Sigmoid colon (tissue), 7 donors: ENCODE measurements at regions of chr1 and their contacts with region 1.

Region 1: DNA sequence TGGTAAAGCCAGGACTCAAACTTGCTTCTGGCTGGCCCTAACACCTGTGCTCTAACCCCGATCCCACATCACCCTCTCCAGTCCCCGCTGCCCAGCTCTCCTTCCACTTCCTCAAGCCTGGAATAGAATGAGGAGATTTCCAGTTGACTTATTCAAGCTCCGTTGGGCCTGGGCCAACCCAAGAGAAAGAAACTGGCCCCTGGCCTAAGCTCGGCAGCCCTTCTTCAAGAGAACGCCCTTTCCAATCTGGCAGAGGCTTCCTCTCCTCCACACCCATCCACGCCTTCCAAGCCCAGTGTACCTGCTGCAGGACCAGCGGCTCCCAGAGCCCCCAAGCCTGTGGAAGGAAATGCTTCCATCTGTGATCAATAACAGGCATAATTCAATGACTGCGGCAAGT is 51.9 kb downstream of the LRRN2 start:
- DNase-seq: peak; percentile 87
- H3K4me3 ChIP-seq: no peak overlapping the region
- H3K27ac ChIP-seq: no peak overlapping the region
- H3K4me1 ChIP-seq: peaks cover 0 to 28% (median 18%) of the 10 kb centered on the region in 4 donors
- H3K27me3 ChIP-seq: no peaks in the 10 kb centered on the region
- CTCF ChIP-seq: no peak
- EP300 ChIP-seq: no peak
- POLR2A ChIP-seq: no peak

Region 2: GRCh38 chr1:204516180-204516879 is 117.3 kb before region 1 on chr1 and contains the start of gene MDM4:
- intact Hi-C with region 1: no loop called
- DNase-seq: peak; percentile 96
- H3K4me3 ChIP-seq: peak within 1 kb of the TSS; percentile 74 to 82 (median 79)
- H3K27ac ChIP-seq: peak within 1 kb of the TSS; percentile 88 to 93 (median 90)
- H3K4me1 ChIP-seq: peaks cover 0 to 41% (median 32%) of the 10 kb centered on the region in 4 donors
- H3K27me3 ChIP-seq: no peaks in the 10 kb centered on the region
- CTCF ChIP-seq: no peak
- EP300 ChIP-seq: peak in 1 of 4 donors; percentile 40
- POLR2A ChIP-seq: peak; percentile 71 to 83
- total RNA-seq, gene MDM4: 48.2 to 82.0 (median 53.1) TPM

Region 3: DNA sequence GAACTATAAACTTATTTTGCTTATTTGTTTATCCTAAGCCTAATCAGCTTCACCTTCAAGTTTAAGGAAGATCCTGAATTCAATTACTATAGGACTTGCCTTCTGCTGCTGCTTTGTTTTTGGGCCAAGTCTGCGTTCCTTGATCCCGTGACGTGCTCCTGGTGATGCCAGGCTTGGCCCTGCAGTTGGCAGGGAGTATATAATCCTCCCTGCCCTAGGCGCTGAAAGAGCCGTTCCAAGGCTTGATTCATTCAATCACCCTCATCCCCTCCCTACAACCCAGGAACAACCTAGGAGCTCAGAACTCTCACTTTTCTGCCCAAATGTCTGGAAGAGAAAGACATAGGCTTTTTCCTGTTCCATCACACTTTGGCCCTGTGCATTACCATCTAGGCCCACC is 64.2 kb after region 1 on chr1:
- intact Hi-C with region 1: loop called (anchors 5 kb)
- DNase-seq: peak; percentile 83
- H3K4me3 ChIP-seq: no peak overlapping the region
- H3K27ac ChIP-seq: peak overlapping the region in 2 of 4 donors; percentile 17 to 25
- H3K4me1 ChIP-seq: peaks cover 0 to 13% (median 7%) of the 10 kb centered on the region in 4 donors
- H3K27me3 ChIP-seq: no peaks in the 10 kb centered on the region
- CTCF ChIP-seq: no peak
- EP300 ChIP-seq: no peak
- POLR2A ChIP-seq: no peak